T-cell (primary cell): ENCODE measurements at regions of chr7 and their contacts with region 1.

Region 1: GRCh38 chr7:131040467-131040932 is 287.2 kb upstream of the MKLN1 start:
- DNase-seq: peak in 25 of 35 experiments; percentile 25 to 81 (median 43)
- ATAC-seq: peak; percentile 47 to 73 (median 66)
- H3K4me3 ChIP-seq: no peak overlapping the region
- H3K4me3 Mint-ChIP-seq: peak overlapping the region in 2 of 3 donors; percentile 1 to 36
- H3K27ac ChIP-seq: no peak overlapping the region
- H3K27ac Mint-ChIP-seq: peak overlapping the region; percentile 53 to 60
- H3K4me1 ChIP-seq: peaks cover 0 to 19% of the 10 kb centered on the region in 2 experiments
- H3K4me1 Mint-ChIP-seq: peaks cover 76 to 78% (median 77%) of the 10 kb centered on the region in 3 donors
- H3K27me3 ChIP-seq: no peaks in the 10 kb centered on the region
- H3K27me3 Mint-ChIP-seq: no peaks in the 10 kb centered on the region

Region 2: DNA sequence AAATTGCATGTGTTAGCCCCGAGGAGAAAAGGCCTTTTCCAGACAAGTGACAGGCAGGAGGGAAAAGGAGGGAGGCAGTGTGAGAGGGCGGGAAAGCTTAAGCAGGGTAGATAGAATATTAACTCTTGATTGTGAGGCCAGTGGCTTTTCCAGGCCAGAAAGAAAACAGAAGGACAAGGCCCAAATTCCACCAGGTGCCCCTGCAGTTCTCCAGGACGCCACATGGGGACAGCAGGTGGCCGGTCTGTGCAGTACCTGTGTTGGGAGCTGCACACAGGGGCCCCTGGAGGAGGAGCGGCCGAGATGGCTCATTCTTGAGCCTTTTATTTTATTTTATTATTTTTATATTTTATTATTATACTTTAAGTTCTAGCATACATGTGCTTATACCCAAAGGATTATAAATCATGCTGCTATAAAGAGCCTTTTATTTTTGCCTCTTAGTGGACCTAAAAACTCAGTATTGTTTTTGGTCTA is 165.2 kb before region 1 on chr7:
- CTCF ChIA-PET with region 1: interaction called in 1 of 2 experiments, 10 read pairs
- POLR2A ChIA-PET with region 1: interaction called in 1 of 2 experiments, 3 read pairs
- DNase-seq: peak in 27 of 35 experiments; percentile 11 to 64 (median 36)
- ATAC-seq: peak; percentile 47 to 71 (median 56)
- H3K4me3 ChIP-seq: no peak overlapping the region
- H3K4me3 Mint-ChIP-seq: no peak overlapping the region
- H3K27ac ChIP-seq: no peak overlapping the region
- H3K27ac Mint-ChIP-seq: peak overlapping the region in 1 of 2 donors; percentile 65
- H3K4me1 ChIP-seq: peaks cover 2 to 3% of the 10 kb centered on the region in 2 experiments
- H3K4me1 Mint-ChIP-seq: peaks cover 25 to 38% (median 32%) of the 10 kb centered on the region in 3 donors
- H3K27me3 ChIP-seq: no peaks in the 10 kb centered on the region
- H3K27me3 Mint-ChIP-seq: no peaks in the 10 kb centered on the region

Region 3: DNA sequence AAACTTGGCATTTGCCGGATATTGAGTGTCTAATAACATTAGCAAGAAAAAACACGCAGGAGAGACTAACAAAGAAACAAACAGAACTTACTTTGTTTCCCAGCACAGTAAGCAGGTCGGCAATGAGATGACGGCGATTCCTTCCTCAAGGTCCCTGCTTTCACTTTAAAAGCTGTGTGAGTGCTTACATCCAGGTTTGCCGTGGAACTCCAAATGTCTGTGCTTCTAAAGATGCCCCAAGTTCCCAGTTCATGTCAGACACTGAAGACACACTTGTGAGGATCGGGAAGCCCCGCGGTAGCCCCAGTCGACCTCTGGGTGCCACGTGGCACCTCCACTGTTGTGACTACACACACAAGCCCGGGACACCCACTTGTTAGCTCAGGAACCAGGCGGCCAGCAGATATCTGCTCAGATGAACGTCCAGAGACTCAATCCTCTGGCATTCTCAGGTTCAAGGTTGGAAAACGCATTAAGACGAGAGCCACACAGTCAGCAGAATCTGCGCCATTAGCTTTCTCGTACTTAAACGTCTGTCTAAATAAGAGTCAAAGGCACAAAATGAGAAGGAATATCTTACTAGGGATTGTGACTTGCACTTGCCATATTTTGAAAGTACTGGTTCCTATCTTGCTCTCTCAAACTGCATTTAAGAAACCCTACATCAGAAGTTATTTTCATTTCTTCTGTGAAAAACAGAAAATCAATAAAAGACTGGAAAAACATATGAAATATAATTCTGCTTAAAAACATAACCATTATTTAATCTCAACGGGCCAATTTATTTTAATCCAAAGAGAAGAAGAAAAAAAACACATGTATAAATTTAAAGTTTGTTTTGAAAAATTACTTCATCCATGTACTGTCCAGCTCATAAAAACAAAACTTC is 98.9 kb before region 1 on chr7:
- CTCF ChIA-PET with region 1: interaction called, 3 to 4 read pairs
- POLR2A ChIA-PET with region 1: interaction called in 1 of 2 experiments, 11 read pairs
- DNase-seq: peak in 18 of 35 experiments; percentile 24 to 67 (median 34)
- ATAC-seq: peak in 2 of 4 experiments; percentile 15 to 29
- H3K4me3 ChIP-seq: peak overlapping the region in 1 of 2 donors; percentile 53
- H3K4me3 Mint-ChIP-seq: peak overlapping the region; percentile 84 to 87 (median 84)
- H3K27ac ChIP-seq: peak overlapping the region; percentile 90
- H3K27ac Mint-ChIP-seq: peak overlapping the region; percentile 96 to 97
- H3K4me1 ChIP-seq: peaks cover 0 to 56% of the 10 kb centered on the region in 2 experiments
- H3K4me1 Mint-ChIP-seq: peaks cover 91 to 97% (median 92%) of the 10 kb centered on the region in 3 donors
- H3K27me3 ChIP-seq: no peaks in the 10 kb centered on the region
- H3K27me3 Mint-ChIP-seq: no peaks in the 10 kb centered on the region

Region 4: DNA sequence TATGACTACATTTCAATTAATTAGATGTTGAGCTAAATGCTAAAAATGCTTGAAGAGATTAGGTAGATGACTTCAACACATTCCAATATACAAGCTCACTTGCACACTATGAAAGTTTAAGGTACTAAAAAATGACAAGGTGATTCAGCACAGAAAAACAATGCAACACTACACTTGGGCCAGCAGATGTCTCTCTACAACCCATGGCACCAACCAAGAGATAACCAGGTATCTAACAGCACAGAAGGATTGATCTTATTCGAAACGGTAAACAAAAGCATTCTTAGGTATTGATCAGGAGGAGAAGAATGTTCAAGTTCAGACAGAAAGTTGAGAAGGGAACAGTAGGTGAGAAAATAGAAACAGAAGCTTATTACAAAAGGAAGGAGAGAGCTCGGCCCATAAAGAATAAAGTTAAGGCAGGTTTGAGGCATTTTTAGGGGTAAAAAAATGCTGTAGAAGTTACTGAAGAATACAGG is 58.3 kb before region 1 on chr7:
- CTCF ChIA-PET with region 1: interaction called, 8 to 76 read pairs
- POLR2A ChIA-PET with region 1: interaction called, 4 to 8 read pairs
- DNase-seq: peak in 7 of 35 experiments; percentile 17 to 73 (median 20)
- ATAC-seq: peak; percentile 68 to 81 (median 77)
- H3K4me3 ChIP-seq: no peak overlapping the region
- H3K4me3 Mint-ChIP-seq: no peak overlapping the region
- H3K27ac ChIP-seq: peak overlapping the region; percentile 79
- H3K27ac Mint-ChIP-seq: no peak overlapping the region
- H3K4me1 ChIP-seq: peaks cover 0 to 48% of the 10 kb centered on the region in 2 experiments
- H3K4me1 Mint-ChIP-seq: peaks cover 42 to 54% (median 50%) of the 10 kb centered on the region in 3 donors
- H3K27me3 ChIP-seq: no peaks in the 10 kb centered on the region
- H3K27me3 Mint-ChIP-seq: no peaks in the 10 kb centered on the region

Region 5: DNA sequence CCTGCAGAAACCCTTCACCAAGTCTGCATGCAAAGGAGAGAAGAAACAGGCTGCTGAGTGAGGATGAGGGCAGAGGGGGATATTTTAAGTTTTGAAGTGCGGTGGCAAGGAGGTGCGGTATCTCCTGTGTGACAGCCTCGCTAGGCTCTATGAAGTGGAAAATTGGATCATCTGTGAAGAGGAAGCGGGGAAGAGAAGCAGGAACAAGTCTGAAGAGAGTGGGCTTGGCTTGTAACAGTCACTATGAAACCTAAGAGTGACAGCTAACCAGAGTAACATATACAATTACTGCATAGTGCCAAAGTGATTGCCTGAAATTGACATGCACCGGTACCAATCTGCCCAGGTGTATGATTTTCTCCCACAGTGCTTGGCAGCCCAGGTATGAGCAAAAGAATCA is 19.0 kb before region 1 on chr7:
- CTCF ChIA-PET with region 1: interaction called in 1 of 2 experiments, 10 read pairs
- POLR2A ChIA-PET with region 1: interaction called in 1 of 2 experiments, 3 read pairs
- DNase-seq: no peak
- ATAC-seq: peak in 3 of 4 experiments; percentile 10 to 40 (median 11)
- H3K4me3 ChIP-seq: no peak overlapping the region
- H3K4me3 Mint-ChIP-seq: peak overlapping the region; percentile 49 to 63 (median 56)
- H3K27ac ChIP-seq: peak overlapping the region; percentile 27
- H3K27ac Mint-ChIP-seq: peak overlapping the region; percentile 80 to 87
- H3K4me1 ChIP-seq: peaks cover 0 to 65% of the 10 kb centered on the region in 2 experiments
- H3K4me1 Mint-ChIP-seq: peaks cover 89 to 91% (median 90%) of the 10 kb centered on the region in 3 donors
- H3K27me3 ChIP-seq: no peaks in the 10 kb centered on the region
- H3K27me3 Mint-ChIP-seq: no peaks in the 10 kb centered on the region

Region 6: GRCh38 chr7:131071786-131072504 is 31.4 kb after region 1 on chr7:
- CTCF ChIA-PET with region 1: interaction called, 7 to 11 read pairs
- POLR2A ChIA-PET with region 1: interaction called, 4 to 5 read pairs
- DNase-seq: no peak
- ATAC-seq: no peak
- H3K4me3 ChIP-seq: no peak overlapping the region
- H3K4me3 Mint-ChIP-seq: peak overlapping the region in 1 of 3 donors; percentile 62
- H3K27ac ChIP-seq: no peak overlapping the region
- H3K27ac Mint-ChIP-seq: peak overlapping the region; percentile 43 to 58
- H3K4me1 ChIP-seq: peaks cover 2 to 40% of the 10 kb centered on the region in 2 experiments
- H3K4me1 Mint-ChIP-seq: peaks cover 37 to 93% (median 91%) of the 10 kb centered on the region in 3 donors
- H3K27me3 ChIP-seq: no peaks in the 10 kb centered on the region
- H3K27me3 Mint-ChIP-seq: no peaks in the 10 kb centered on the region